Activated CD4-positive, alpha-beta T cell treated with anti-CD3 and anti-CD28 coated beads, Interleukin-2, amount 10 ng/mL, durations not matched to agents 7 days and 5 days (primary cell): ENCODE measurements at regions of chr21 and their contacts with region 1.

Region 1: GRCh38 chr21:36319765-36320420 is at the start of gene MORC3:
- DNase-seq: peak; percentile 98
- H3K4me3 Mint-ChIP-seq: peak within 1 kb of the TSS; percentile 96
- H3K27ac Mint-ChIP-seq: peak within 1 kb of the TSS; percentile 99
- H3K4me1 Mint-ChIP-seq: peaks cover 36% of the 10 kb centered on the region
- H3K27me3 Mint-ChIP-seq: no peaks in the 10 kb centered on the region
- total RNA-seq, gene MORC3: 47.5 to 50.7 TPM

Region 2: GRCh38 chr21:36169436-36170128 is 150.3 kb before region 1 on chr21:
- CTCF ChIA-PET with region 1: interaction called, 3 read pairs
- POLR2A ChIA-PET with region 1: interaction called, 11 read pairs
- DNase-seq: no peak
- H3K4me3 Mint-ChIP-seq: no peak overlapping the region
- H3K27ac Mint-ChIP-seq: peak overlapping the region; percentile 77
- H3K4me1 Mint-ChIP-seq: peaks cover 17% of the 10 kb centered on the region
- H3K27me3 Mint-ChIP-seq: no peaks in the 10 kb centered on the region

Region 3: GRCh38 chr21:36288651-36289243 is 31.1 kb before region 1 on chr21:
- CTCF ChIA-PET with region 1: interaction called, 4 read pairs
- POLR2A ChIA-PET with region 1: interaction called, 12 read pairs
- DNase-seq: no peak
- H3K4me3 Mint-ChIP-seq: peak overlapping the region; percentile 53
- H3K27ac Mint-ChIP-seq: peak overlapping the region; percentile 97
- H3K4me1 Mint-ChIP-seq: peaks cover 33% of the 10 kb centered on the region
- H3K27me3 Mint-ChIP-seq: no peaks in the 10 kb centered on the region

Region 4: GRCh38 chr21:36297921-36298594 is 21.8 kb before region 1 on chr21:
- CTCF ChIA-PET with region 1: interaction called, 6 read pairs
- POLR2A ChIA-PET with region 1: interaction called, 25 read pairs
- DNase-seq: peak; percentile 91
- H3K4me3 Mint-ChIP-seq: peak overlapping the region; percentile 70
- H3K27ac Mint-ChIP-seq: peak overlapping the region; percentile 95
- H3K4me1 Mint-ChIP-seq: peaks cover 55% of the 10 kb centered on the region
- H3K27me3 Mint-ChIP-seq: no peaks in the 10 kb centered on the region